OCI-LY7 (cell line): ENCODE measurements at regions of chr2 and their contacts with region 1.

Region 1: GRCh38 chr2:203583701-203584100 is 48.6 kb upstream of the RAPH1 start:
- DNase-seq: peak; percentile 81
- H3K4me3 ChIP-seq: peak overlapping the region; percentile 51
- H3K27ac ChIP-seq: peak overlapping the region; percentile 92
- H3K4me1 ChIP-seq: peaks cover 78% of the 10 kb centered on the region
- CTCF ChIP-seq: no peak

Region 2: DNA sequence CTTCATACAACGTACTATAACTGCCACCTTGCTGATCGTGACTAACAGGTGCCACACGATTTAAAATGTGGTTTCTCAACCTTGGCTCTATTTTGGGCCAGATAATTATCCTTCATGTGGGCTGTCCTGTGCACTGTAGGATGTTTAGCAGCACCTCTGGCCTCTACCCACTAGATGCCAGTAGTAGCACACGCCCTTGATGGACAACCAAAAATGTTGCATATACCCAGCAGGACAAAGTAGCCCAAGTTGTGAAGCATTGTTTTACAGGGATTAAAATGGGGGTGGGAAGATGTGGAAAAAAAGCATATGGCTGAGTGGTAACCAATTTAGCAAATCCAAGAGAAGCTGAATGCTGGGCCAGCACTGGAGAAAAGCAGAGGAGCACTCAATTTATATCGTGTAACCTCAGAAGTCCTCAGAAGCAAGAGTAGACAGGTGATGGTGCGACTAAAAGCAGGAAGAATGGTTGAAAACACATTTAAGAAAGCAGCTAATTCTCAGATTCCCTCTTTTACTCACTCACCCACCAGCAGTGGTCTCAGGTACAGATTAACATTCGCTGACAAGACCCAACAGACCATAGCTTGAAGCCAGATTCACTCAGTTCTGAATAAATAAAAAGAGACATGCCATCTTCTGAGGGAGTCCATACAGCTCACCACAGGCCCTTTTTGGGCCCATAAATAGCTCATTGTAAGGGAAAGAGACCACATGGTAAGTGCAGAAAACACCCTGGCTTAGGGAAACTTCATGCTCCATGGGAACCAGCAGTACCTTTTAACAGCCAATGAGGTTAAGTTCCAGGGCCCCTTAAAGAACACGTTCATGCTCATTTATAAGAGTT is 99.2 kb before region 1 on chr2:
- CTCF ChIA-PET with region 1: no interaction called
- POLR2A ChIA-PET with region 1: interaction called, 4 read pairs
- intact Hi-C with region 1: loop called (anchors 1 kb)
- DNase-seq: peak; percentile 82
- H3K4me3 ChIP-seq: no peak overlapping the region
- H3K27ac ChIP-seq: peak overlapping the region; percentile 48
- H3K4me1 ChIP-seq: peaks cover 25% of the 10 kb centered on the region
- CTCF ChIP-seq: peak; percentile 99

Region 3: DNA sequence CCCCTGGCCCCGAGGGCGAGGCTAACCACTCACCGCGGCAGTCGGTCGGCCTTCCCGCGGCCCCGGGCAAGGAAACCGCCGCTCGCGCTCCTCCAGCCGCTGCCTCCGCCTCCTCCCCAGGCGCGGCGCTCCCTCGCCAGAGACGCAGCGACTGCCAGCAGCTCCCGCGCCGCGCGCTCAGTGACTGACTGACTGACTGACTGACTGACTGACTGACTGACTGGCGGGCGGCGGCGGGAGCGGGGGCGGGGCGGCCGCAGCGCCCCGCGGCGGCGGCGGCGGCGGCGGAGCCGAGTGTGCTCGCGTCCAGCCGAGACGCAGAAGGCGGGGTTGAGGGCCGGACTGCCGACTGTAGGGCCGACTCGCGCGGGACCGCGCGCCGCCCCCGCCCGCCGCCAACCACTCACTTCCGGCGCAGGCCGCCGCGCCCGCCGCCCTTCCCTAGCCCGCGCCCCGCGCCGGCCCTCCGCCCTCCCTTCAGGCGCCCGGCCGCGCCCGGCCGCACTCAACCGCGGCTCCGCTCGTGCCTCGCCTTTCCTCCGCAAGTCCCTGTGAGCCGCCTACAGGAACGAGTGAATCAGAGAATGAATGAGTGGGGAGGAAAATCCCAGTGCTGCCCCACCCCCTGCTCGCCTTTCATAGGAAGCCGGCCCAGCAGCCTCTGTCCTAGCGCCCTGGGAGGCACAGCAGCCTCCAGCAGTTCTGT is 48.5 kb before region 1 on chr2 and contains the start of gene RAPH1:
- CTCF ChIA-PET with region 1: no interaction called
- POLR2A ChIA-PET with region 1: interaction called, 5 read pairs
- intact Hi-C with region 1: loop called (anchors 2 kb)
- DNase-seq: peak; percentile 82
- H3K4me3 ChIP-seq: peak within 1 kb of the TSS; percentile 90
- H3K27ac ChIP-seq: peak within 1 kb of the TSS; percentile 58
- H3K4me1 ChIP-seq: peaks cover 31% of the 10 kb centered on the region
- CTCF ChIP-seq: no peak
- total RNA-seq, gene RAPH1: 4.0 and 4.5 TPM in 2 replicates

Region 4: DNA sequence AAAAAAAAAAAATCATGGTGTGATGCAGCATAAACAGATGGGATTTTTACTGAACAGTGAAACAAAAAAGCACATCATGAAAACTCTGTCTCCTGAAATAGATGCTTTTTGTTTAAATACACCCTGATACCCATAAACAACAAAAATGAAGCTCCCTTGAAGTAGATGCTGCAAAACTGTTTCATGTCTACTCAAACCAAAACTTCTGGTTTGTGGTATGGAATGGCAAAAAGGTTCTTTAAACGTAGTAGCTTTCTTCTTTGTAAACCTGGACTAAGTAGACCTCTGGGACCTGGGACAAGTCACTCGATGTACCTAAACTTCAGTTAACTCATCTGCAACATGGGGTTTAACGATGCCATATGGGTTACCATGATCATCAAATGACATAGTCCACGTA is 15.8 kb after region 1 on chr2:
- CTCF ChIA-PET with region 1: interaction called, 8 read pairs
- POLR2A ChIA-PET with region 1: interaction called, 114 read pairs
- intact Hi-C with region 1: loop called (anchors 1 kb)
- DNase-seq: no peak
- H3K4me3 ChIP-seq: peak overlapping the region; percentile 61
- H3K27ac ChIP-seq: peak overlapping the region; percentile 91
- H3K4me1 ChIP-seq: peaks cover 61% of the 10 kb centered on the region
- CTCF ChIP-seq: no peak

Region 5: GRCh38 chr2:203612266-203612665 is 28.6 kb after region 1 on chr2:
- CTCF ChIA-PET with region 1: no interaction called
- POLR2A ChIA-PET with region 1: interaction called, 12 read pairs
- intact Hi-C with region 1: no loop called
- DNase-seq: no peak
- H3K4me3 ChIP-seq: no peak overlapping the region
- H3K27ac ChIP-seq: no peak overlapping the region
- H3K4me1 ChIP-seq: peaks cover 13% of the 10 kb centered on the region
- CTCF ChIP-seq: no peak

Region 6: GRCh38 chr2:204251158-204251997 is 667.7 kb after region 1 on chr2:
- CTCF ChIA-PET with region 1: no interaction called
- POLR2A ChIA-PET with region 1: no interaction called
- intact Hi-C with region 1: no loop called
- DNase-seq: no peak
- H3K4me3 ChIP-seq: no peak overlapping the region
- H3K27ac ChIP-seq: no peak overlapping the region
- H3K4me1 ChIP-seq: no peaks in the 10 kb centered on the region
- CTCF ChIP-seq: no peak